ENCODE measurements at regions of chr6 and their contacts with region 1.

Region 1: GRCh38 chr6:41321183-41321582 is 14.2 kb upstream of the NCR2 start:
- DNase-seq: no peak

Region 2: GRCh38 chr6:40563111-40563510 is 758.1 kb before region 1 on chr6:
- intact Hi-C with region 1: loop called in 1 of 2 experiments (anchors 5 kb)
- DNase-seq: peak; percentile 24

Region 3: GRCh38 chr6:42879372-42880239 is 1558.4 kb after region 1 on chr6 and contains the start of gene RPL7L1:
- intact Hi-C with region 1: no loop called
- DNase-seq: peak; percentile 94
- total RNA-seq, gene RPL7L1: 52.9 to 63.0 TPM